Left colon (tissue), 2 donors: ENCODE measurements at regions of chr11 and their contacts with region 1.

Region 1: DNA sequence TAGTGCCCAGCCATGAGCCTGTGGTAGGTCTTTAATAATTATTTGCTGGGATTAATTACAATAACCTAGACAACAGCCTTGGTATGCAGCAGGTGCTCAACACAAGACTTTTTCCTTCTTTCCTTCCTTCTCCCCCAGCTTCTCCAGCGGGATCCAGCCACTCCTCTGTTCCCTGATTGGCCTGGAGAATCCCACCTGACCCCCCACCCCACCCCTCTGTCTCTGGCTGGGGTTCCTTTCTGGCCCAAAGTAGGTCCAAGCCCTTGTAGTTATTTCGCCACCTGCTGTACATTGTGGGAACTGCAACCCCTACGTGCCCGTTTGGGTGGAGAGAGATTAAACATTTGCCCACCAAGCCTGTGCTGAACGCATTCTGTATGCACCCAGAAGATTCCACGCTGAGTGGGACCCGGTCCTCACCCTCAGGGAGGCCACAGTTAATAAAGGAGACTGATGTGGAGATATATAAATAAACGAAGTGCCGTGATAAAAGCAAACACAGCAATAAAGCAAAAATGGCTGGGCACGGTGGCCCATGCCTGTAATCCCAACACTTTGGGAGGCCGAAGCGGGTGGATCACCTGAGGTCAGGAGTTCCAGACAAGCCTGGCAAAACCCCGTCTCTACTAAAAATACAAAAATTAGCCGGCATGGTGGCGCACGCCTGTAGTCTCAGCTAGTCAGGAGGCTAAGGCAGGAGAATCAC is 32.1 kb upstream of the DGKZ start:
- DNase-seq: peak; percentile 72 to 81
- ATAC-seq: peak; percentile 65

Region 2: DNA sequence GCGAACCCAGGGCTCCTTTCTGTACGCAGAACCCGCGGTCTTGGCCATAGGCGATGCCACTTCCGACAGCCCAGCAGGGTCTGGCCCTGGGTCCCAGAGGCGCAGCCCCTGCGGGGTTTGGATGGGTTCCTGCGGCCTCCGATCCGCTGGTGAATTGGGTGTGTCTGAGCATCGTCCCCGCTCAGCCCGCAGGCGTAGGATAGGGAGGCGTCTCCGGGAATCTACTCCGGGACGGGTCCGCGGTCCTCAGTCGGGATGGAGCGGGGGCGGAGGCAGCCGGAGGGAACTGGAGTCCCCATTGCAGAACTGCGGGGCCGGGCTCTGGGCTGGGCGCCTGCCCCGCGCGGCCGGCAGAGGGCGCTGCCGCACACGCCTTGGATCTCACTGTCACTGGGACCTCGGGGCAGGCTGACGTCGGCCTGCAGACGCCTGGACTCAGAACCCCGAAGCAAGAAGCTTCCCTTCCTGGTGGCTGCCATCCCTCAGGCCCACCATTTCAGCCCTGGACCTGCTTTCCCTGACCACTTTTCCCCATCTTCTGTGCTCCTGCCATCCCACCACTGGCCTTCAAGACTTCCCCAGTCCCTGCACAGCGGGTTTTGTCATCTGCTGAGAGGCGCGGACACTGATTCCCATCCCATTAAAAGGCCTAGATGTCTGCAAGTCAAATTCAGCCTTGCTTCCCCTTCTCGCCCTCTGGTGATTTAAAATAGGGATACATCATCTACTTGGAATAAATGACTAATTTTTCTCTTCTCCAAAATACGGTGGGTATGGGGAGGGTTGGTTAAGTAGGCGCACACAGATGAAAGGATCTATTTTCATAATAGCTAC is 76.0 kb before region 1 on chr11:
- intact Hi-C with region 1: loop called in 1 of 2 experiments (anchors 10 kb)
- DNase-seq: peak; percentile 76 to 81
- ATAC-seq: peak; percentile 73

Region 3: DNA sequence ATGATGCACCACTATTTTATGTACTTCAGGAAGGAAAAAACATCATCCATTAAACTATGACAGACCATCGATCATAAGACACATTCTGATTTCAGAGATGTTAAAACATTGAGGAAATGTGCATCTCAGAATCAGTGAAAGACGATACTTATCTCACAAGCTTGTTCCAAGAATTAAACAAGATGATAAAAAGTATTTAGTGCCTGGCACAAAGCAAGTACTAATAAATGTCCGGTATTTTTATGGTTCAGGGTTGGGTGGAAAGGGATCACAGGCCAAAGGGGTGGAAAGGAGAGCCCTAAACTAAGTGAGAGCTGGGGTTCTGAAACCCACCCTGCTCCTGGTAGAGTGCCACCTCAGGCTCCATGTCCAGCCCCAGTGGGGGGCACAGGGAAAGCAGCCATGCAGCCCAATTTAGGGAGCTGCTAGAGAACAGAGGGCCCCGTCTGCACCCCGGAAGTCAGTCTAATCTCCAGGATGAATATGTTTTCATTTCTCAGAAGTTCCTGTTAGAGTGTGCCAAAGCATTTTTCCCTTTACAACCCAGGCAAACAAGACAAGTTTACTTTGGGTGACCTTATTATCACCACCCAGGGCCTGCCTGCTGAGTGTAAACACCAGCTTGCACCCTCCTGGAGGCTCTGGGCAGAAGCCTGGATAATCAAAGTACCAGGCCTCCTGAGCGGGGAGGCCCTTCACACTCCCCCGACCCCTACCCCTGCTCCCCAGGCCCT is 41.5 kb before region 1 on chr11:
- intact Hi-C with region 1: loop called in 1 of 2 experiments (anchors 2 kb)
- DNase-seq: peak; percentile 63 to 80
- ATAC-seq: peak; percentile 62

Region 4: DNA sequence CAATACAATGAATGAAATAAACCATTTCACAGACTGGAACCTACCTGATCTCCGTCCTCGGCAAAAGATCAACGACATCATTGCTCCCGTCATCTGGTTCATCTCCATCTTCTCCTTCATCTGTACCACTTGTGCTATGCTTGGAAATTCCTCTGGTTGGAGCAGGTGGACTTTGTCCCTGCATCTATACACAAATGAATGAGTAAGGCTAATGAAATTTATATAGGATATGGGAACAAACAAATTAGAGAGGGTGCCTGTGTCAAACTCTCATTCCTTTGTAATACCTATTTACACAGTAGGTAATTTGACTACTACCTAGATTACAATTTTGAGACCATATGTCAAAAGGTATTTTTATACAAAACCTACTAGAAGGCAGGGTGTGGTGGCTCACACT is 463.2 kb after region 1 on chr11:
- intact Hi-C with region 1: no loop called
- DNase-seq: no peak
- ATAC-seq: peak; percentile 25